Endothelial cell of umbilical vein (primary cell): ENCODE measurements at regions of chr7 and their contacts with region 1.

Region 1: GRCh38 chr7:137656227-137656849 is 190.4 kb downstream of the DGKI start:
- DNase-seq: peak; percentile 89
- H3K4me3 ChIP-seq: no peak overlapping the region
- H3K27ac ChIP-seq: no peak overlapping the region
- H3K4me1 ChIP-seq: peaks cover 9% of the 10 kb centered on the region
- H3K27me3 ChIP-seq: no peaks in the 10 kb centered on the region
- CTCF ChIP-seq: peak; percentile 77
- POLR2A ChIP-seq: no peak

Region 2: GRCh38 chr7:136056651-136057231 is 1599.6 kb before region 1 on chr7:
- CTCF ChIA-PET with region 1: no interaction called
- POLR2A ChIA-PET with region 1: no interaction called
- dilution Hi-C with region 1: no loop called
- intact Hi-C with region 1: no loop called
- DNase-seq: no peak
- H3K4me3 ChIP-seq: no peak overlapping the region
- H3K27ac ChIP-seq: no peak overlapping the region
- H3K4me1 ChIP-seq: no peaks in the 10 kb centered on the region
- H3K27me3 ChIP-seq: peaks cover 0 to 2% of the 10 kb centered on the region in 2 experiments
- CTCF ChIP-seq: no peak
- POLR2A ChIP-seq: no peak

Region 3: GRCh38 chr7:137626469-137627067 is 29.8 kb before region 1 on chr7:
- CTCF ChIA-PET with region 1: interaction called, 20 read pairs
- POLR2A ChIA-PET with region 1: no interaction called
- dilution Hi-C with region 1: no loop called
- intact Hi-C with region 1: no loop called
- DNase-seq: peak; percentile 54
- H3K4me3 ChIP-seq: no peak overlapping the region
- H3K27ac ChIP-seq: no peak overlapping the region
- H3K4me1 ChIP-seq: no peaks in the 10 kb centered on the region
- H3K27me3 ChIP-seq: peaks cover 1 to 10% of the 10 kb centered on the region in 2 experiments
- CTCF ChIP-seq: peak; percentile 78 to 92
- POLR2A ChIP-seq: no peak

Region 4: DNA sequence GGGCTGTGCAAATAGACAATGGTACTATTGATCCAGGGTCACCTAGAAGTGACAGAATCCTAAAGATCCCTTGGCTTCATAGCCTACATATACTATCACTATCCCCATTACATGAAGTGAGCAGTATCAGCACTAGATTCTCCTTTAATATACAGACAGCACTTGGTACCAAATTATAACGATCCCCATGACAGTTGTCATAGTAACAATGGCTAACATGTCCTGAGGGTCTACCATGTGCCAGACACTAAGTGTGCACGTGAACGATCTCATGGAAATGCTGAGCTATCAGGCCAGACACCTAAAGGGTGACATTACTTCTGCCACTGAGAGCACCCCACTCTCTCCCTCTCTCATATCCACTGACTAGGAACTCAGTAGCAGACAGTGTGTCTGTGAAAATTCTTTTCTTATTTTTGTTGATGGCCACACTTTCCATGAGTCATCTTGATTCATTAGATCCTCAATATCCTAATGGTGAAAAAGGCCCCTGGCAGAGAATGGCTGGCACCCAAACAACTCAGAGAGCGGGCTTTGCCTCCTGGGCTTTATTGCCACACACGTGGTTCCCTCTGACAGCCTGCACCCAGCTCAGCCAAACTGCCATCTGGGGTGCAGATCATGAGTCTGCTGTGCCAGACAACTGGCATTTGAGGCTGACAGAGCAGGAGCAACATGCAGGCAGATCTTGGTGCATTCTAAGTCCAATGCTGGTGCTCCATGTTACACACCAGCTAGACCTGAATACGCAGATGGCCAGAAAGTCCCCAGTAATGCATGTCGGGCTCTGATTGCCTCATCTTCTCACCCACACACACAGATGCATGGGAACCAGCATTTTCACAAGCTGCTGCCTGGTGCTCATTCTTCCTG is 14.1 kb after region 1 on chr7:
- CTCF ChIA-PET with region 1: interaction called, 13 read pairs
- POLR2A ChIA-PET with region 1: no interaction called
- dilution Hi-C with region 1: no loop called
- intact Hi-C with region 1: no loop called
- DNase-seq: no peak
- H3K4me3 ChIP-seq: no peak overlapping the region
- H3K27ac ChIP-seq: no peak overlapping the region
- H3K4me1 ChIP-seq: no peaks in the 10 kb centered on the region
- H3K27me3 ChIP-seq: no peaks in the 10 kb centered on the region
- CTCF ChIP-seq: no peak
- POLR2A ChIP-seq: no peak

Region 5: GRCh38 chr7:137820677-137821420 is 164.5 kb after region 1 on chr7:
- CTCF ChIA-PET with region 1: interaction called, 11 read pairs
- POLR2A ChIA-PET with region 1: no interaction called
- dilution Hi-C with region 1: no loop called
- intact Hi-C with region 1: no loop called
- DNase-seq: no peak
- H3K4me3 ChIP-seq: no peak overlapping the region
- H3K27ac ChIP-seq: no peak overlapping the region
- H3K4me1 ChIP-seq: no peaks in the 10 kb centered on the region
- H3K27me3 ChIP-seq: peaks cover 6 to 8% of the 10 kb centered on the region in 2 experiments
- CTCF ChIP-seq: no peak
- POLR2A ChIP-seq: no peak

Region 6: DNA sequence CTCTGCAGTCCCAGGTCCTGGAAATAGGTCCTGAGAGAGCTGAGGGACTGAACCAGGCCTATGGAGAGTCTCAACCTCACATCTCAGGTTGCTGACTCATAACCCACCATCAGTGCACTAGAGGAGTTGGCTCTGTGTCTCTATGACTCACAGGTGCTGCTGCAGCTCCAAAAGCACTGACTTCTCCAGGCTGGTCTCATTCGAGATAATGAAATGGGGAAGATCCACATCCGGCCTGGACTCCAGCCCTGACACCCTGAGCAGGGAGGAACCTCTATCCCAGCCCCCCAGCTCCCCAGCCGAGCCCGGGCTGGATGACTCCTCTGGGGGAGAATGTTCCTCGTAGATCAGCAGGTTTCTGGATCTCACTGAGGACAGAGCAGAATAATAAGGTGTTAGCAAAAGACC is 225.9 kb after region 1 on chr7:
- CTCF ChIA-PET with region 1: interaction called, 31 read pairs
- POLR2A ChIA-PET with region 1: no interaction called
- dilution Hi-C with region 1: no loop called
- intact Hi-C with region 1: no loop called
- DNase-seq: peak; percentile 48
- H3K4me3 ChIP-seq: no peak overlapping the region
- H3K27ac ChIP-seq: peak overlapping the region; percentile 5
- H3K4me1 ChIP-seq: peaks cover 8% of the 10 kb centered on the region
- H3K27me3 ChIP-seq: no peaks in the 10 kb centered on the region
- CTCF ChIP-seq: no peak
- POLR2A ChIP-seq: no peak

Region 7: GRCh38 chr7:138008547-138009349 is 352.4 kb after region 1 on chr7:
- CTCF ChIA-PET with region 1: interaction called, 56 read pairs
- POLR2A ChIA-PET with region 1: no interaction called
- dilution Hi-C with region 1: no loop called
- intact Hi-C with region 1: loop called (anchors 1 kb)
- DNase-seq: peak; percentile 58
- H3K4me3 ChIP-seq: no peak overlapping the region
- H3K27ac ChIP-seq: no peak overlapping the region
- H3K4me1 ChIP-seq: peaks cover 8% of the 10 kb centered on the region
- H3K27me3 ChIP-seq: no peaks in the 10 kb centered on the region
- CTCF ChIP-seq: peak; percentile 65 to 72
- POLR2A ChIP-seq: no peak

Region 8: DNA sequence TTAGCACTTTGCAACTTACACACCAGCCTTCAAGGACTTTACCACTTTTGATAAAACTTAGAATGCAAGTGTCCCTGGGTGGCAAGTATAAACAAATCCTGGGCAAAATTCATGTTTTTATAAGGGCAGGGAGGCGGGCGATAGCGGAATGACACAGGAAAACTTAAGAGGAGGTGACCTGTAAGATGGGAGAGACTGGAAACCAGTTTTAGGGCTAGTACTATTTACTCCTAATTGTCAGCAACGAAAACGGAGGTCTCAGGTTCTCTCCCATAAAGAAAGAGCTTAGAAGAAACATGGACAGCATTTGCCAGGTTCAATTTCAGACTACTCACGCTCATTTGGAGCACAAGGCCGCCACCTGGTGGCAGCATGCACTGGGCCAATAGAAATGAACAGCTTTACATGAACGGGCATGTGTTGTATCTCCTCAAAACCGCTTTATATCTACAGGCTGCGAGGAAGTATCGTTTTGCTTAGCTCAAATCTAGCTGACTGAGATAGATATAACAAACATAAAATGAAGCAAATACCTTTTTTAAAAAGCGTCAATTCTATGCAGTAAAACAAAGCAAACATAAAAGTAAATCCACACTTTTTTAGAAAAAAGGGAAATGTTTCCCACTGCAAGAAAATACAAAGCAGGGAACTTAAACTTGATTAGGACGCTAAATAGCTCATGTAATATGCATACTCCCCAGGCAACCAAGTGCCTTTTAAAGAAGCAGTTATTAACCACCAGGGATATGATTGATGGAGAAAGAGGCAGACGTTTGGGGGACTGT is 1082.4 kb after region 1 on chr7:
- CTCF ChIA-PET with region 1: interaction called, 11 read pairs
- POLR2A ChIA-PET with region 1: no interaction called
- dilution Hi-C with region 1: no loop called
- intact Hi-C with region 1: no loop called
- DNase-seq: peak; percentile 89
- H3K4me3 ChIP-seq: no peak overlapping the region
- H3K27ac ChIP-seq: no peak overlapping the region
- H3K4me1 ChIP-seq: no peaks in the 10 kb centered on the region
- H3K27me3 ChIP-seq: no peaks in the 10 kb centered on the region
- CTCF ChIP-seq: peak; percentile 89 to 96
- POLR2A ChIP-seq: no peak